OCI-LY7 (cell line): ENCODE measurements at regions of chr2 and their contacts with region 1.

Region 1: GRCh38 chr2:230225486-230225885 is at the start of gene SP140:
- DNase-seq: peak; percentile 57
- H3K4me3 ChIP-seq: peak within 1 kb of the TSS; percentile 51
- H3K27ac ChIP-seq: peak within 1 kb of the TSS; percentile 69
- H3K4me1 ChIP-seq: peaks cover 54% of the 10 kb centered on the region
- CTCF ChIP-seq: no peak
- total RNA-seq, gene SP140: 4.3 and 4.8 TPM in 2 replicates

Region 2: DNA sequence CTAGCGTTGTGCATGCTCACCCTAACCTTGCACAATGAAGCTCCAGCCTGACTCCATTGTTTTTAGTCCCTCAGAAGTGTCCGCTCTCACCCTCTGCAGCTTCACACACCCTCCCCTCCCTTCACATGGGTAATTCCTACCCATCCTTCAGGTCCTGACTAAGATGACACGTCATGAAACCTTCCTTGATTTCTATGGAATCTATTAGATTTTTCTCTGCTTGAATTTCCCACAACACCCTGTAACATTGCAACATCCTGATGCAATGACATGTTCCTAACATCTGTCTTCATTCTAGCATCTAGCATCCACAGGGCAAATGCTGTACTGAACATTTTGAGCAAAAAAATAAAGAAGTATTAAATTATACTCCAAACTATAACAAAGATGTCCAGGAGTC is 877.4 kb before region 1 on chr2:
- CTCF ChIA-PET with region 1: no interaction called
- POLR2A ChIA-PET with region 1: no interaction called
- intact Hi-C with region 1: no loop called
- DNase-seq: no peak
- H3K4me3 ChIP-seq: no peak overlapping the region
- H3K27ac ChIP-seq: no peak overlapping the region
- H3K4me1 ChIP-seq: no peaks in the 10 kb centered on the region
- CTCF ChIP-seq: no peak

Region 3: DNA sequence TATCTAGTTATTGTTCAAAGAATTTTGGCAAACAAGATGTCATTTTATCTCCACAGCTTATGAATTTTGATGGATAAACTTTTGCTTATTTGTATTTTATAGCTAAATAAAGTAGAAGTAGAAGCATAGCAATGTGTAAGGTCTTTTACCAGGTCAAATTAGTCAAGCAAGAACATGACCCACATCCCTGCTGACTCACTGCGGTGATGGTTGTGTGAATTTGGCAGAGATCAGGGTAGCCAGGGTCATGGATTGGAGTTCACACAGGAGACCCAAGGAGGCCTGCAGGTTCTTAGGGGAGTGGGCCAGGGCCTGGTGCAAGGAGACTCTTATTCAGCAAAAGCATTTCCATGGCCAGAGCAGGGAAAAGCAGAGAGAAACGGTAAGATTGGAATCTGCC is 18.7 kb after region 1 on chr2:
- CTCF ChIA-PET with region 1: no interaction called
- POLR2A ChIA-PET with region 1: no interaction called
- intact Hi-C with region 1: no loop called
- DNase-seq: no peak
- H3K4me3 ChIP-seq: no peak overlapping the region
- H3K27ac ChIP-seq: no peak overlapping the region
- H3K4me1 ChIP-seq: no peaks in the 10 kb centered on the region
- CTCF ChIP-seq: no peak

Region 4: GRCh38 chr2:230319211-230319862 is 93.9 kb after region 1 on chr2:
- CTCF ChIA-PET with region 1: no interaction called
- POLR2A ChIA-PET with region 1: interaction called, 4 read pairs
- intact Hi-C with region 1: loop called (anchors 5 kb)
- DNase-seq: peak; percentile 92
- H3K4me3 ChIP-seq: peak overlapping the region; percentile 40
- H3K27ac ChIP-seq: peak overlapping the region; percentile 76
- H3K4me1 ChIP-seq: peaks cover 25% of the 10 kb centered on the region
- CTCF ChIP-seq: no peak